ENCODE measurements at regions of chr12 and their contacts with region 1.

Region 1: DNA sequence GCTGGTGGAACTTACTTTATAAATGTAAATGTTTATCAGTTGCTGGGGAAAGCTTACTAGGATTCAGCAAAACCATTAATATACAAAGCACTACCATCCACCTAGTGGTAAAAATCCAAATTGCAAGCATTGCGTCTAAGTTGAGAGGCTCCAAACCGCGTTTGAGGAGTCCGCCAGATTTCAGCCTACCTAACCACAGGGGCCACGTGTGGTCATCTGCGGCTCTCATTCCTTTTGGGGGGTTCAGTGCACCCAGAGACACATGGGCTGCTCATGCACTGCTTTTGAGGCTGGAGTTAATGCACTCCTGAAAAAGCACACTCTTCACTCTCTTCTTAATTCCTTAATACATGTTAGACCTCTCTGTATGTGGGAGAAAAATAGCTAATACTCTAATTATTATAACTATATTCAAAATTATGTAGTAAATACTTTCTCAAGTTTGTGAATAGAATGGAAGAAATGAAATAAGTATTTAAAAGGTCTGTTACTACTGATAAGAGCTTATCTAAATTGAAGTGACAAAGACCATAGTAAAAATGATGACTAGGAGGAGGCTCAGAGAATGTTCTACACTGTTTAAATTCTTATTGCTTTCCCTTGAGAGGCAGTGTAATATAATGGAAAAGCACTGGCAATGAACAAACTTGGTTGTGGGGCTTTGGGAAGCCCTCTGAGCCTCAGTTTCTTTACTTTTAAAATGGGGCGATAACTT is 41.4 kb upstream of the MANSC4 start:
- DNase-seq: peak; percentile 56 to 70
- H3K4me3 ChIP-seq: peak overlapping the region; percentile 49; the same call in 1 of the 2 replicates
- H3K27ac ChIP-seq: peak overlapping the region; percentile 97
- H3K4me1 ChIP-seq: peaks cover 33% of the 10 kb centered on the region
- H3K27me3 ChIP-seq: no peaks in the 10 kb centered on the region
- CTCF ChIP-seq: peak; percentile 92

Region 2: GRCh38 chr12:27434673-27435565 is 386.5 kb before region 1 on chr12:
- CTCF ChIA-PET with region 1: no interaction called
- POLR2A ChIA-PET with region 1: no interaction called
- intact Hi-C with region 1: no loop called
- DNase-seq: peak in 1 of 2 experiments; percentile 8
- H3K4me3 ChIP-seq: no peak overlapping the region
- H3K27ac ChIP-seq: no peak overlapping the region
- H3K4me1 ChIP-seq: 0 out of 2 replicates have a peak, but pooled peaks cover 3% of the 10 kb centered on the region
- H3K27me3 ChIP-seq: no peaks in the 10 kb centered on the region
- CTCF ChIP-seq: peak; percentile 77

Region 3: GRCh38 chr12:27779920-27780611 is 41.4 kb before region 1 on chr12 and contains the starts of genes KLHL42 and MANSC4:
- CTCF ChIA-PET with region 1: interaction called, 5 read pairs
- POLR2A ChIA-PET with region 1: no interaction called
- intact Hi-C with region 1: loop called (anchors 5 kb)
- DNase-seq: peak; percentile 59 to 77
- H3K4me3 ChIP-seq: peak within 1 kb of the TSS; percentile 74
- H3K27ac ChIP-seq: peak within 1 kb of the TSS; percentile 64
- H3K4me1 ChIP-seq: peaks cover 45% of the 10 kb centered on the region
- H3K27me3 ChIP-seq: no peaks in the 10 kb centered on the region
- CTCF ChIP-seq: no peak; the same call in 1 of the 2 replicates
- total RNA-seq, gene KLHL42: 33.6 and 34.5 TPM in 2 replicates
- total RNA-seq, gene MANSC4: not detected in 2 replicates

Region 4: DNA sequence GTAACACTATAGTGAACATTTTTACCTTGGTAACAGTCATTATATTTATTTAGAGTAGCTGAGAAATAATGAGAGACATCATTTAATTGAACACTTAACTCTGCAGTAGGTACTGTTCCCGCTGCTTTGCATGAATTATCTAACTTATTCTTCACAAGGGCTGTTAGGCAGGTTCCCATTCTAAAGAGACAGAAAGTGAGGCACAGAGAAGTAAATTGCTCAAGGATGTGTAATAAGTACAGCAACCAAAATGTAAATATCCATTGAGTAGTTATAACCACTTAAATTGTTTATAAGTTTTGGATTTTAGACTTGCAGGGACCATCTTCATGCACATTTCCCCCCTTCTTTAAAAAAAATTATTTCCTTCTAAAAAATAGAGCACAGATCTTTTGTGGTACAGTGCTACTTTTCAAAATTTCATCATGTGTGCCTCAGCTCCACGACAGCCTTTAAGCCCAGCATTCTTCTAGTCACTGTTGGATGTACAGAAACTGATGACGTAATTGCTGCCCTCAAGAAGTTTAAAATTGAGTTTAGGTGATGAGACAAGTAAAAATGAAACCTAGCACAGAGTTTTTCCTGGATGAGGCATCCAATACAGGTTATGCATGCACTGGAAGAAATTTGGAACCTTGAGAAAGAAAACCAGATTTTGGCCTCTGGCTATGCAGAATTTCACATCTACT is 35.4 kb before region 1 on chr12:
- CTCF ChIA-PET with region 1: interaction called, 14 read pairs
- POLR2A ChIA-PET with region 1: no interaction called
- intact Hi-C with region 1: loop called (anchors 5 kb)
- DNase-seq: peak in 1 of 2 experiments; percentile 81
- H3K4me3 ChIP-seq: no peak overlapping the region; the same call in 1 of the 2 replicates
- H3K27ac ChIP-seq: peak overlapping the region; percentile 78
- H3K4me1 ChIP-seq: peaks cover 49% of the 10 kb centered on the region
- H3K27me3 ChIP-seq: no peaks in the 10 kb centered on the region
- CTCF ChIP-seq: no peak

Region 5: DNA sequence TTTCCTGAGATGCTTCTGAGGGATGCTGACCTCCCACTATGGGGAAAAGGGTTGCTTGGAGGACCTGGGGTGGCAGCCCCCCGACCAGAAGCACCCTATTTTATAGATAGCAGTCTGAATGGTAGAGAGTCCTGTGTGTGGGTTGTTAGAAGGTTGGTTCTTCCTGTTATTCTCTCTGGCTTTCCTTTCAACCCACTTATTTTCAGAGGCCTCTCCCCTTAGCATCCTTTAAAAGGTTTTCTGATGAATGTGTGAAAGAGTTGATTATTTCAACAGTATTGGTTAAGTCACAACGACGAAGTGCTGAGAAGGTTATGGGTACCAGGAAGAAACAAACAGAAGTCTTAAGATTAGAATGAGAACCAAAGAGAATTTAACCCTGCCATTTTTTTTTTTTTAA is 20.6 kb before region 1 on chr12:
- CTCF ChIA-PET with region 1: interaction called, 14 read pairs
- POLR2A ChIA-PET with region 1: no interaction called
- intact Hi-C with region 1: no loop called
- DNase-seq: no peak
- H3K4me3 ChIP-seq: no peak overlapping the region
- H3K27ac ChIP-seq: no peak overlapping the region
- H3K4me1 ChIP-seq: no peaks in the 10 kb centered on the region
- H3K27me3 ChIP-seq: no peaks in the 10 kb centered on the region
- CTCF ChIP-seq: no peak

Region 6: DNA sequence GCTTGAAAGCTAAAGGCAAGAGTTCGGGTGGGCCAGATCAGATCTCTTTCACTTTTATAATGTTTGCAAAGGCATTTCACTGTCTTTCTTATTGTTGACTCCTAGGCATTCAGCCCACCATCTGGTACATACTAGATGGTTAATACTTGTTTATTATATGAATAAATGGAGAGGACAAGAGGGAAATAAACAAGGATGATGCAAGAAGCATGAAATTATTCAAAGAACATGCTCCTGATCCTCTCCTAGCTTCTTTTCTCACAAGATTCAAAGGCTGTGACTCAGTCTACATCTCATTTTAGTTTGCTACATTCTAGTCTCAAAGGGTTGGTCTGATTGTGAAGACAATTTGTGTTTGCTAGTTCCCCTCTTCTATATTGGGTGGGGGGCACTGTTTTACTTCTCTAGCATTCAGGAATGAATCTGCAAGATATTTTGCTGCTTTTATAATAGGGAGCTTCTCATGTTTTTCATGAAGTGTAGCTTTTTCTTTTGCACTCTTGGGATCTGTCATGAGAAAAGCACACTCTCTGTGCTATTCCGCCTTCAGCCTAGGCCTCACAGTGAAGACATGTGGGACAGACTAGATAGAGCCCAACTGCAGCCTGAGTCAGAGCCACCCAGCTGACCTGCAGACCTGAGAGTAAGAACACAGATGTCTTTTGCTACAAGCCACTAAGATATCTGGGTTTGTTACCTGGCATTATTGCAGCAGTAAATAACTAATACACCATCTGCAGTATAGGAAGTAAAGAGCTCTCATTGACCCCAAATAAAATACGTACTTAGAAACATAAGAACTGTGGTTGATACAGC is 85.5 kb after region 1 on chr12:
- CTCF ChIA-PET with region 1: interaction called, 3 read pairs
- POLR2A ChIA-PET with region 1: no interaction called
- intact Hi-C with region 1: loop called (anchors 5 kb)
- DNase-seq: no peak
- H3K4me3 ChIP-seq: no peak overlapping the region
- H3K27ac ChIP-seq: peak overlapping the region; percentile 59
- H3K4me1 ChIP-seq: peaks cover 29% of the 10 kb centered on the region
- H3K27me3 ChIP-seq: no peaks in the 10 kb centered on the region
- CTCF ChIP-seq: no peak

Region 7: GRCh38 chr12:27940756-27941402 is 119.5 kb after region 1 on chr12:
- CTCF ChIA-PET with region 1: interaction called, 10 read pairs
- POLR2A ChIA-PET with region 1: no interaction called
- intact Hi-C with region 1: no loop called
- DNase-seq: peak; percentile 64 to 81
- H3K4me3 ChIP-seq: no peak overlapping the region
- H3K27ac ChIP-seq: no peak overlapping the region
- H3K4me1 ChIP-seq: no peaks in the 10 kb centered on the region
- H3K27me3 ChIP-seq: no peaks in the 10 kb centered on the region
- CTCF ChIP-seq: peak; percentile 87

Region 8: DNA sequence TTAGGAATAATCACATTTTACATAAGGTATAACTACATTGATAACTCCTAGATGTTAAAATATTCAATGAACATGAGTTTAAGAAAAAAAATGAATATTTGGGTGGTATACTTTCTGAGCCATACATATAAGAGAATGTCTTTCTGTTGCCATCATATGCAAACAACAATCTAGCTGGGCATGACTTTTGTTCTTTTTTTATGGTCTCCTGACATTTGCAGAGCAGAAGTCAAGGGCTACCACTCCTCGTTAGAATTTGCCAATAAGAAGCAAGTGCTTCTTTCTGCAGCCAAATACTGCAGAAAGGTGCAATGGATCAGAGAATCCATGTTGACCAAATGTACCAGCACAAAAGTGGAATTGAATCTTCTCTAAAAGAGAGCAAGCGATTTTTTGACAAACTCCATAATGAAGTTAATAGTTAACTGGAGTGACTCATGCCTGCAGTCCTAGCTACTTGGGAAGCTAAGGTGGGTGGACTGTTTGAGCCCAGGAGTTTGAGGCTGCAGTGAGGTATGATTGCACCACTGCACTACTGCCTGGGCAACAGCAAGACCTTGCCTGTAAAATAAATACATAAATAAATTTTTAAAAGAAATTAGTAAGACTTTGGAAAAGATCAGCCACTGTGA is 343.3 kb after region 1 on chr12:
- CTCF ChIA-PET with region 1: no interaction called
- POLR2A ChIA-PET with region 1: no interaction called
- intact Hi-C with region 1: loop called (anchors 10 kb)
- DNase-seq: no peak
- H3K4me3 ChIP-seq: no peak overlapping the region
- H3K27ac ChIP-seq: no peak overlapping the region
- H3K4me1 ChIP-seq: no peaks in the 10 kb centered on the region
- H3K27me3 ChIP-seq: no peaks in the 10 kb centered on the region
- CTCF ChIP-seq: no peak

Measured in PC-9 (cell line).